ENCODE measurements at regions of chr2 and their contacts with region 1.

Region 1: DNA sequence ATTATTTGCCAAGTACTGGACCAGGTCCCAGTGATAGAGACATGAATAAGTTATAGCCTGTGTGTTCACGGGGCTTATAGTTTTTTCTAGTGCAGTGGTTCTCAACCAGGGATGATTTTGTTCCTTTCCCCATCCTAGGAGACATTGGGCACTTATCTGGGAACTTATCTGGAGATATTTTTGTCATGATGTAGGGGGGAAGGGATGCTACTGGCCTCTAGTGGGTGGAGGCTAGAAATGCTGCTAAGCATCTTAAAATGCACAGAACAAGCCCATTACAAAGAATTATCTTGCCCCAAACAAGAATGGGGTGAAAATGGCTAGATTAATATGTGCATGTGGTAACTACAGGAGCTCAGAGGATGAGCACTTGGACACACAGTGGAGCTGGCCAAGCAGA is 75.2 kb downstream of the KLHL29 start:
- DNase-seq: no peak
- H3K4me3 ChIP-seq: no peak overlapping the region
- H3K27ac ChIP-seq: no peak overlapping the region
- H3K4me1 ChIP-seq: no peaks in the 10 kb centered on the region
- H3K27me3 ChIP-seq: no peaks in the 10 kb centered on the region; a peak in 2 of 7 replicates
- CTCF ChIP-seq: peak in 2 of 3 experiments; percentile 61 to 75; a peak in 3 of 4 replicates
- EP300 ChIP-seq: no peak
- POLR2A ChIP-seq: no peak
- RAD21 ChIP-seq: peak; percentile 77 to 82

Region 2: GRCh38 chr2:23436346-23437098 is 23.7 kb before region 1 on chr2:
- CTCF ChIA-PET with region 1: interaction called, 14 read pairs
- POLR2A ChIA-PET with region 1: no interaction called
- DNase-seq: peak; percentile 44 to 59
- H3K4me3 ChIP-seq: no peak overlapping the region
- H3K27ac ChIP-seq: no peak overlapping the region
- H3K4me1 ChIP-seq: peaks cover 0 to 13% (median 10%) of the 10 kb centered on the region in 4 experiments; a peak in 4 of 7 replicates
- H3K27me3 ChIP-seq: no peaks in the 10 kb centered on the region
- CTCF ChIP-seq: no peak
- EP300 ChIP-seq: no peak
- POLR2A ChIP-seq: no peak
- RAD21 ChIP-seq: no peak

Measured in H1 (cell line).